ENCODE measurements at regions of chr14 and their contacts with region 1.

Region 1: GRCh38 chr14:64005822-64006221 is 153.0 kb downstream of the SYNE2 start:
- DNase-seq: no peak
- H3K4me3 ChIP-seq: no peak overlapping the region
- H3K27ac ChIP-seq: no peak overlapping the region
- H3K4me1 ChIP-seq: no peaks in the 10 kb centered on the region
- H3K27me3 ChIP-seq: no peaks in the 10 kb centered on the region
- CTCF ChIP-seq: no peak
- POLR2A ChIP-seq: no peak

Region 2: DNA sequence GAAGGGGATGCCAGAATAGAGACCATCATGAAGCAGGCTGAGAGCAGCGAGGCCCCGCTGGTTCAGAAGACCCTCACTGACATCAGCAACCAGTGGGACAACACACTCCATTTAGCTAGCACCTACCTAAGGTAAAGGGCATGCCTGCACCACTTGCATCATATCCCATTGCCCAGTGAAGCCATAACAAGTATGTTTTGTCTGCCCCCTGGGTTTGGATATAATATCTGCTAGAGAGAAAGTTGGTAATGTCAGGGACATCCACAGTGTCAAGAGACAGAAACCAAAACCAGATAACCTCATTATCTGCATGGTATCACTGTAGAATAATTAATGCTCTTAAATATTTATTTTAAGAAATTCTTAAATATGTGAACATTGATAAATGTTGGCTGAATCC is 20.8 kb after region 1 on chr14:
- CTCF ChIA-PET with region 1: interaction called, 17 read pairs
- POLR2A ChIA-PET with region 1: no interaction called
- dilution Hi-C with region 1: no loop called
- intact Hi-C with region 1: no loop called
- DNase-seq: no peak
- H3K4me3 ChIP-seq: no peak overlapping the region
- H3K27ac ChIP-seq: no peak overlapping the region
- H3K4me1 ChIP-seq: no peaks in the 10 kb centered on the region
- H3K27me3 ChIP-seq: no peaks in the 10 kb centered on the region
- CTCF ChIP-seq: no peak
- POLR2A ChIP-seq: no peak

Measured in endothelial cell of umbilical vein (primary cell).